Activated B cell treated with CpG ODN at 0.5 μM for 24 hours (primary cell): ENCODE measurements at regions of chr18 and their contacts with region 1.

Region 1: DNA sequence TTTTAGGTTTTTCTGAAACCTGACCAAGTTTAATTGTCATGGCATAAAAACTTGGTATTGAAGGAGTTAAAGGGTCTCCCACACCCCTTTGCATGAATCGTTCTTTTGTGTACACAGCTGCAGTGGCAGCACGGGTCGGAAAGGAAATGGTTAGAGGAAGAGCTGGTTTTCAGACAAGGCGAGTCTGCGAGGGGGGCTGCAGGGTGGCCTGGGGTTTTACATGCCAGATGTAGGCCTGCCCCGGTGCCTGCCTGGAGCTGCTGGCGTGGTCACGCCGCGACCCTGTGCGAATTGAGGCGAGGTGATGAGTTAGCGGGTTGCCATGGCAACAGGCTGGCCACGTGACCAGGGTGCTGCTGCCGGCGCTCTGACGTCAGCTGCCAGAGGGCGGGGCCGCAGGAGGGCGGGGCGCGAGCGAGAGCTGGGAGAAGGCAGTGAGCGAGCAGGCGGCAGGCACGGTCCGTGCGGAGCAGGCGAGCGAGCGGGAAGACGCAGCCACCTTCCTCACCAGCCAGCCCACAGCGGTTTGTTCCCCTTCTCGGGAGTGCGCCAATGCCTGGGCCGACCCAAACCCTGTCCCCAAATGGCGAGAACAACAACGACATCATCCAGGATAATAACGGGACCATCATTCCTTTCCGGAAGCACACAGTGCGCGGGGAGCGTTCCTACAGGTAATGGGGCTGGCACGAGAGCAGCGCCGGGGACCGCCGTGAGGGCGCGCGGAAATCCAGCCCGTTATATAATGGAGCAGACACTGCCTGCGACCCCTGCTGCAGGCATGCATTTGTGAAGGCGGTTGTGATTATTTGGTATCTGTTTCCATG is at the start of gene MAPRE2:
- DNase-seq: peak; percentile 100
- ATAC-seq: peak; percentile 84
- H3K4me3 Mint-ChIP-seq: peak within 1 kb of the TSS; percentile 98
- H3K27ac Mint-ChIP-seq: peak within 1 kb of the TSS; percentile 98
- H3K4me1 Mint-ChIP-seq: peaks cover 85% of the 10 kb centered on the region
- H3K27me3 Mint-ChIP-seq: no peaks in the 10 kb centered on the region
- CTCF ChIP-seq: no peak
- total RNA-seq, gene MAPRE2: 47.9 and 53.8 TPM in 2 replicates

Region 2: GRCh38 chr18:35071819-35072247 is 30.6 kb after region 1 on chr18:
- CTCF ChIA-PET with region 1: no interaction called
- POLR2A ChIA-PET with region 1: interaction called, 4 read pairs
- intact Hi-C with region 1: loop called (anchors 1 kb)
- DNase-seq: no peak
- ATAC-seq: no peak
- H3K4me3 Mint-ChIP-seq: no peak overlapping the region
- H3K27ac Mint-ChIP-seq: peak overlapping the region; percentile 54
- H3K4me1 Mint-ChIP-seq: peaks cover 44% of the 10 kb centered on the region
- H3K27me3 Mint-ChIP-seq: no peaks in the 10 kb centered on the region
- CTCF ChIP-seq: no peak

Region 3: DNA sequence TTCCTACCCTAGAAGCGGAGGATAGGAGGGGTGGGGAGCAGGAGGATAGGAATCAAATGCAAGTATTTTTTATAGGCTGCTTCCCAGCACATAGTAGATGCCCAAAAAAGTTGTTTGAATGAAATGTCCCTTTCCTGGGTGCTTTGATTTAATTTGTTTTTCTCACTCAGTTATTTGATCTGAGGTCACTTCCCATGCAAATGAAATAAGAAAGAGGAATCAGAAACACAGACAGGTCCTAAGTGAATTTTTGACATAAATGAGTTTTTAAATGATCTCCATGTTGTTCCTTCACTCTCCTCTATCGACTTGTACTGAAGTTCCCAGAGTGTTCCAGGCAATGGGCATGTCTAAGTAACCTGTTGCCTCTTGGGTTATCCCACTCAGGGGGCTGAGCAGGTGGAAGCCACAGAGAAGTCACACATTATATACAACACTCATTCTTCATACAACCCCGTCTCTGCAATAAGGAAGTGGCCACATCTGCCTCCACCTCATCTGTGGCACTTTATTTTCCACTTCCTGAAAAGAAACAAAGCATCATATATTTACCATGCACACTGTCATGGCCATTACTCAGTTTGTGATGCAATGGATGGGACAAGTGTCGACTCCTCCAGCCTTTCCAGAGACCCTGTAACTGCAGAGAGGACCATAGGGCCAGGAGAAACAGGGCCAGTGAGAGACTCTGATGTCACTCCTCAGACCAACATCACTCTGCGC is 117.7 kb after region 1 on chr18:
- CTCF ChIA-PET with region 1: no interaction called
- POLR2A ChIA-PET with region 1: no interaction called
- intact Hi-C with region 1: loop called (anchors 2 kb)
- DNase-seq: no peak
- ATAC-seq: peak; percentile 91
- H3K4me3 Mint-ChIP-seq: peak overlapping the region; percentile 73
- H3K27ac Mint-ChIP-seq: peak overlapping the region; percentile 97
- H3K4me1 Mint-ChIP-seq: peaks cover 31% of the 10 kb centered on the region
- H3K27me3 Mint-ChIP-seq: no peaks in the 10 kb centered on the region
- CTCF ChIP-seq: no peak

Region 4: GRCh38 chr18:35290073-35290735 is 249.0 kb after region 1 on chr18 and contains the start of gene ZSCAN30:
- CTCF ChIA-PET with region 1: no interaction called
- POLR2A ChIA-PET with region 1: interaction called, 4 read pairs
- intact Hi-C with region 1: loop called (anchors 5 kb)
- DNase-seq: peak; percentile 92
- ATAC-seq: peak; percentile 97
- H3K4me3 Mint-ChIP-seq: peak within 1 kb of the TSS; percentile 100
- H3K27ac Mint-ChIP-seq: peak within 1 kb of the TSS; percentile 99
- H3K4me1 Mint-ChIP-seq: peaks cover 51% of the 10 kb centered on the region
- H3K27me3 Mint-ChIP-seq: peaks cover 2% of the 10 kb centered on the region
- CTCF ChIP-seq: no peak
- total RNA-seq, gene ZSCAN30: 21.2 and 23.8 TPM in 2 replicates

Region 5: DNA sequence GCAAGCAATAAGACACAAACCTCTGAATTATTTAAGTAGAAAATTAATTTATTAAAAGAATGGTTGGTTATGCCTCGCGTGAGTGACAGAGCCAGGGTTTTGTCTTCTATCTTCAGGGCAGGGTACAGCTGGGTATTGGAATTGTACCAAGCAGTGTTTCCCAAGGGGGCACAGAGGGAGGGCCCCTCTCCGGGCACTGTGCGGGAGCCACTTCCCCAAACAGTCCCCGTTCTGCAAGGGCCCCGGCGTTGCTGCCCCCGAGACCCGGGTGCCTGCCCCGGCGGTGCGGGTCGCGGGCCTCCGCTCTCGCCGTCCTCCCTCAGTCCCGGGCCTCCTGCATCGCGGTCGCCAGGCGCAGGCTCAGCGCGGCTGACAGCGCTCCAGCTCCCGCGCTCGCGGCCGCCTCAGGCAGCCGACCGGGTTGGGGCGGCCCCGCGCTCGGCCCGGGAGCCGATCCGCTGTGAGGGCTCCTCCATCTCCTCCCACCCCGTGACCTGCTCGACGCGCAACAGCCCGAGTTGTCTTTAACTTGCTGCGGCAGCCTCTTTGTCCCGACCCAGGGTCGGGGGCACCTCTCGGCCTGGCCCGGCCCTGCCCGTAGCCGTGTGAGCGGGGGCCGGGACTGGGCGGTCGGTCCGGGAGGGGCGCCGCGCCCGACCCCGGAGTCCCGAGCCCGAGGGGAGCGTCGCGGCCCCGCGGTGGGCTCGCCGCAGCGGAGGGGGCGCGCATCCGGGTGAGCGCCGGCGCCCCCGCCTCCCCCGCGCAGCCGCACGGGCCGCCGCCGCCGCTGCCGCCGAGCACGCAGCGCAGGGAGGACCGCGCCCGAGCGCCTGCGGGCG is 539.7 kb after region 1 on chr18:
- CTCF ChIA-PET with region 1: no interaction called
- POLR2A ChIA-PET with region 1: no interaction called
- intact Hi-C with region 1: loop called (anchors 5 kb)
- DNase-seq: peak; percentile 73
- ATAC-seq: peak; percentile 71
- H3K4me3 Mint-ChIP-seq: peak overlapping the region; percentile 79
- H3K27ac Mint-ChIP-seq: peak overlapping the region; percentile 83
- H3K4me1 Mint-ChIP-seq: peaks cover 42% of the 10 kb centered on the region
- H3K27me3 Mint-ChIP-seq: no peaks in the 10 kb centered on the region
- CTCF ChIP-seq: no peak

Region 6: DNA sequence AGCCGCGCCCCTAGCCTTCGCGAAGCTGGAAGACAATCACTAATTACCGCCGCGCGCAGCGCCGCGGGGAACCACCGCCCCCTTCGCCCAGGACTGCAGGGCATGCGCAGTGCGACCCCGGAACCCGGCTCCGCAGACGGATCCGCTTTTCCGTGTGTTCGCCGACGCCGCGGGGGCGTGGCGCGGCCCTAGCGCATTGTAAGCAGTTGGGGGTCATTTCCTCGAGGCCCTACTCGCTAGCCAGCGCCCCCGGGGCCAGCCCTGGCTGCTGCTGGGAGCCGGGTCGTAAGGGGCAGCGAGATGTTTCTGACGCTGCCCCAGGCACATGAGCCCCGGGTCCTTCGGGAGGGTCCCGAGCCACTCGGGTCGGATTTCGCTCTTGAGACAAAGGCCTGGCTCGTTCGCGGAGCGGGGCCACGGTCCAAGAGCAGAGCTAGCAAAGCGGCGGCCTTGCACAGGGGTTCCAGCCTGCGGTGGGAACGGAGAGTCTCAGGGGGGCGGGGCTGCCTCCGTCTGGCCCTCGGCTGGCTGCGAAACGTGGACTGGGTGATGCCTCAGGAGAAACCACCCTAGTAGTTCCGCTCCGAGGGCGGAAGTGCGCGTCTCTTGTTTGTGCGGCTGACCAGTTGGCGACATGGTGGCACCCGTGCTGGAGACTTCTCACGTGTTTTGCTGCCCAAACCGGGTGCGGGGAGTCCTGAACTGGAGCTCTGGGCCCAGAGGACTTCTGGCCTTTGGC is 1088.3 kb after region 1 on chr18 and contains the starts of genes ELP2 and SLC39A6:
- CTCF ChIA-PET with region 1: no interaction called
- POLR2A ChIA-PET with region 1: no interaction called
- intact Hi-C with region 1: loop called (anchors 2 kb)
- DNase-seq: peak; percentile 97
- ATAC-seq: peak; percentile 87
- H3K4me3 Mint-ChIP-seq: peak within 1 kb of the TSS; percentile 94
- H3K27ac Mint-ChIP-seq: peak within 1 kb of the TSS; percentile 92
- H3K4me1 Mint-ChIP-seq: peaks cover 57% of the 10 kb centered on the region
- H3K27me3 Mint-ChIP-seq: no peaks in the 10 kb centered on the region
- CTCF ChIP-seq: no peak
- total RNA-seq, gene ELP2: 105 and 124 TPM in 2 replicates
- total RNA-seq, gene SLC39A6: 17.6 and 18.6 TPM in 2 replicates